ENCODE measurements at regions of chr17 and their contacts with region 1.

Region 1: DNA sequence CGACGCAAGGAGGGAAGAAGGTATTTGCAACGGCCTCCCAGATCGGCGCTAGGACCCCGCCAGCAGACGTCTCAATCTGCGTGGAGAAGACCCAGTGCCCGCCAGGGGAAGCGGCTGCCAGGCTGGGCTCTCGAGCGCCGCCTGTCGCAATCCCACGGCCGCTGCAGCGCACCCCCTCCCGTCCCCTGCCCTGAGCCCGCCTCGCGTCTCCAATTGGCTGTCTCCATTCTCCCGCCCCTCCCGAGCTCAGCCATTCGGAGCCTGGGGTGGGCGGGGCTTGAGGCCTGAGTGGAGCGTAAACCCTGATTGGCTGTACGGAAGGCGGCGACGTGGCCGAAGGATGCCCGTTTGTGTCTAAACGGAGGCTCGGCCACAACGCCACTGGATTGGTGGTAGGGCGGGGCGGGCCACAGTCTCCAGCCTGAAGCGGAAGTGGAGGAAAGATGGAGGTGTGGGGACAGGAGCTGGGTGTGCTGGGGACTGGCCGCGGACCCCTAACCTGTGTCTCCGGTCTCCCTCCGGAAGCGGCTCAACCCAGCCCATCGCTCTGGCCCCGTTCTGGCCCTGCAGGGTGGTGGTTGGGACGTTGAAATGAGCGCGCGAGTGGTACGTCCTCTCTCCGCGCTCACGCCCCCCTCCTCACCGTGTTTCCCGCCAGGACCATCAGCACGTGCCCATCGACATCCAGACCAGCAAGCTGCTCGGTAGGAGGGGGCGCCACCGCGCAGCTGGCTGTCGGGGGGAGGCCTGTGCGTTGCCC is at the start of gene CDK5RAP3:
- H3K4me3 ChIP-seq: peak within 1 kb of the TSS; percentile 87
- H3K27ac ChIP-seq: peak within 1 kb of the TSS; percentile 69; the same call in 1 of the 2 replicates
- H3K4me1 ChIP-seq: peaks cover 7% of the 10 kb centered on the region; the same call in 1 of the 2 replicates
- CTCF ChIP-seq: peak; percentile 99

Region 2: DNA sequence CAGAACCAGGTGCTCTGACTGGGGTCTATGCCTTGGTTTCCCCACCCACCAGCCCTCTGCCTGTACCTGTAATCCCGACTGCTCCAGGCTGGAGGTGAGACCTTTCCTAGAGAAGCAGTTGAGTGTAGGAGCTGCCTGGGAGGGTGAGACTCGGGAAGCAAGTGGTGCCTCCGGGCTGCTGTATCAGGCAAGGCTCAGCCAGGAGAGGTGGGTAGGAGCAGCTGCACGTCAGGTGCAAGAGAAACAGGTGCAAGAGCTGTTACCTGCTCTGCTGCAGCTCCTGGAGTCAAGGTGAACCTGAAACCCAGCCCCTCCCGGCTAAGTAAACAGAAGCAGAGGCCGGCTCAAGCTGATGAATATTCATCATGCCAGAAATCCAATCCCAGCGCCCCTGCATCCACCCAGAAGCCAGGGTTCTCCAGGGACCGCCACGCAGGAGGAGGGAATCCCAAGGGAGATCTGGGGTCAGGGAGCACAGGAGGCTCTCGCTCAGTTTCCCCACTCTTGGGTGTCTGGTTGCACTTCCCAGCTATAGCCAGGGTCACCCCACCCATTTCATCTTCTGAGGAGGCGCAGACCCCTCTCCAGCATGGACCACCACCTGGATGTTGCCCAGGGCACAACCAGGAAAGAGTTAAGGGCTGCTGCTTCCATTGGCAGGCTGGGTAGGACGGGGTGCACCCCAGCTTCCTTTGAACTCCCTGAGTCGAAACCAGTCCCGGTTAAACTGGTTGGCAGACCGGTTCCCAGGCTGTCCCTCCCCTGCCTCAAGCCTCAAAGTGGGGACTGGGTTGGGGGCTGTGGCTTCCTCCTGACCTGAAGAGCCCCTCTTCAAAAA is 13.1 kb before region 1 on chr17 and contains the start of gene PRR15L:
- CTCF ChIA-PET with region 1: interaction called, 592 read pairs
- POLR2A ChIA-PET with region 1: interaction called, 26 read pairs
- H3K4me3 ChIP-seq: no peak within 1 kb of the TSS
- H3K27ac ChIP-seq: peak within 1 kb of the TSS; percentile 36; the same call in 1 of the 2 replicates
- H3K4me1 ChIP-seq: peaks cover 28% of the 10 kb centered on the region
- CTCF ChIP-seq: no peak

Region 3: GRCh38 chr17:48011405-48012150 is 40.7 kb after region 1 on chr17:
- CTCF ChIA-PET with region 1: interaction called, 64 read pairs
- POLR2A ChIA-PET with region 1: interaction called, 12 read pairs
- H3K4me3 ChIP-seq: peak overlapping the region; percentile 27
- H3K27ac ChIP-seq: no peak overlapping the region
- H3K4me1 ChIP-seq: peaks cover 7% of the 10 kb centered on the region
- CTCF ChIP-seq: peak; percentile 78

Region 4: GRCh38 chr17:48427598-48427997 is 456.7 kb after region 1 on chr17:
- CTCF ChIA-PET with region 1: no interaction called
- POLR2A ChIA-PET with region 1: no interaction called
- H3K4me3 ChIP-seq: no peak overlapping the region
- H3K27ac ChIP-seq: no peak overlapping the region
- H3K4me1 ChIP-seq: peaks cover 20% of the 10 kb centered on the region
- CTCF ChIP-seq: no peak